ENCODE measurements at regions of chr6 and their contacts with region 1.

Region 1: DNA sequence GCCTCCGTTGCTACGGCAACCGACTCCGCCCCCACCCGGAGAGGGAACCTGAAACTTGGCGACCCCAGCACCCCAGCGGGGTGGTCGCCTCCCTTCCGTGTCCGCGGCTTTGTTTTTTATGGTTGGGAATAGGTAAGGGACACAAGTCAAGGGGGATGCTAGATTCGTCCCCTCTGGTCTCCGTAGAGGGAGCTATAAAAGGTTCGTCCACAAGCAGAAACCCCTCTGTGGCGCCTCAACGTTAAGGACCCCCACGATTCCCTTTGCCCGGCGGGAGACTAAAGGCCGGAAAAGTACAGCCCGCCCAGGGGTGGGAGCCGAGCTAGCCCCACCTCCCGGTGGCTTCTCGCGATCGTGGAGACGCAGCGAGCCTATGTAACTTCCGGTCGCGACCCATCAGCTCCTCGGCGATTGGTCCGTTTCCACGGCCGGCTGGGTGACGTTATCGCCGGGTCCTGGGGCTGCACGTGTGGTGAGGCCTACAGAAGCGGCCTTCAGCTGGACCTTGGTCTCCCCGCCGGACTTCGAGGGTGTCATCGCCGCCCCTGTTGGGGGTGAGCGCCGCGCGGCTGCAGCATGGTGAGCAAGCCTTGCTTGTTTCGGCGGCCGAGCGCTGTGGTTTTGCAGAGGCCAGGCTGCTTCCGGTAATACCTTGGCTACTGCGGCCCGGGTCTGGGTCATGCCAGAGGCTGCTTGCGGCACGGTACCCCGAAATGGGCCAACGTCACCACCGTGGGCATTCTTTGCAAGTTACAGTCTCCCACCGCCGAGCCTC is at the start of gene LTV1:
- DNase-seq: peak; percentile 98
- total RNA-seq, gene LTV1: 14.6 TPM

Region 2: GRCh38 chr6:143592335-143592734 is 250.8 kb before region 1 on chr6:
- intact Hi-C with region 1: loop called (anchors 10 kb)
- DNase-seq: no peak

Region 3: GRCh38 chr6:143677891-143678791 is 164.9 kb before region 1 on chr6 and contains the start of gene PHACTR2:
- intact Hi-C with region 1: loop called (anchors 5 kb)
- DNase-seq: peak; percentile 90
- total RNA-seq, gene PHACTR2: 59.3 TPM

Region 4: DNA sequence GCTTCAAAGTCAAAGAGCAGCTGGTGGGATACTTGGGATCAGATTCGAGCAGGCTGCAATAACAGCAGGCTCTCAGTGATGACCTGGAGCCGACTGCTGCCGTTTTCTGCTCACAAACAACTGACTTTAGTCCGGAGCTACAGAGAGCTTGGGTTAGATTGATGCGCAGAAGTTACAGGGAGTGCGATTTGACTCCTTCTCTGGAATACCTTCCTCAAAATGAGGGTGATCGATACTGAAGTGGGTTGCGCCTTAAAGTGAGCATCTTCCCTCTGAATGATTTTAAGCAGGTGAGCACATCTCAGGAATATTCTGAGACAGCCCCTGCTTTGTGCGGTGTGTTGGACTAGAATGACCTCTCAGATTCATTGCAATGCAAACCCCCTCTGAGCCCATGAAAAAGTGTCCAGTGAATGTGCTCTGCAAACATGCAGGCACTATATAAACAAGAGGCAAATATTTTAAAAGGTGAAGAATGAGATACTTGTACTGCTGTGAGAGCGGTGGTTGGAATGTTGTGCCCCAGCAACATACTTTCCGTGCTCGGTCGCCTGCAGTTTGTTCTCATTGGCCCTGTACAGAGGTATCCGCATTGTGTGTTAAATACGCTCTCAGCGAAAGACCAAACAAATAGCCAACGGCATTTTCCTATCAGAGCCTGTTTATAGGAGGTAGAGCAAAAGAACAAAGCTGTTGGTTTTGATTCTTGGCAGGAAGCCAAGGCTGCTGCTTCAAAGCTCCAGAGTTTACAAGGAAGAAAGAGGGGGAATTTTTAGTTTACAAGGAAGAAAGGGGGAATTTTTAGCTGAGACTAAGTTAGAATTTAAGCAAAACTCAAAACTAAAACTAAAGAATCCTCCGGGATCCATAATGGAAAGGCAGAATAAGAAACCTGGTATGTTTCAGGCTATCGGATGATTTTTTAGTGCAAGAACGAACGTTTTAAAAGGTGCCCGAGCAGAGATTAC is 97.6 kb before region 1 on chr6:
- intact Hi-C with region 1: loop called (anchors 5 kb)
- DNase-seq: no peak

Measured in cardiac septum (tissue), 1 donor.